ENCODE measurements at regions of chr1 and their contacts with region 1.

Region 1: GRCh38 chr1:1273512-1274298 is at the start of gene UBE2J2:
- DNase-seq: peak; percentile 86 to 96
- ATAC-seq: peak; percentile 96 to 99 (median 98)
- H3K4me3 ChIP-seq: peak within 1 kb of the TSS; percentile 74
- H3K4me3 Mint-ChIP-seq: peak within 1 kb of the TSS; percentile 84
- H3K27ac ChIP-seq: peak within 1 kb of the TSS; percentile 36
- H3K27ac Mint-ChIP-seq: peak within 1 kb of the TSS; percentile 51 to 58
- H3K4me1 ChIP-seq: peaks cover 40% of the 10 kb centered on the region
- H3K4me1 Mint-ChIP-seq: peaks cover 28 to 37% of the 10 kb centered on the region in 2 donors
- H3K27me3 ChIP-seq: no peaks in the 10 kb centered on the region
- H3K27me3 Mint-ChIP-seq: no peaks in the 10 kb centered on the region
- CTCF ChIP-seq: no peak
- total RNA-seq, gene UBE2J2: 66.0 to 84.2 (median 78.1) TPM

Region 2: DNA sequence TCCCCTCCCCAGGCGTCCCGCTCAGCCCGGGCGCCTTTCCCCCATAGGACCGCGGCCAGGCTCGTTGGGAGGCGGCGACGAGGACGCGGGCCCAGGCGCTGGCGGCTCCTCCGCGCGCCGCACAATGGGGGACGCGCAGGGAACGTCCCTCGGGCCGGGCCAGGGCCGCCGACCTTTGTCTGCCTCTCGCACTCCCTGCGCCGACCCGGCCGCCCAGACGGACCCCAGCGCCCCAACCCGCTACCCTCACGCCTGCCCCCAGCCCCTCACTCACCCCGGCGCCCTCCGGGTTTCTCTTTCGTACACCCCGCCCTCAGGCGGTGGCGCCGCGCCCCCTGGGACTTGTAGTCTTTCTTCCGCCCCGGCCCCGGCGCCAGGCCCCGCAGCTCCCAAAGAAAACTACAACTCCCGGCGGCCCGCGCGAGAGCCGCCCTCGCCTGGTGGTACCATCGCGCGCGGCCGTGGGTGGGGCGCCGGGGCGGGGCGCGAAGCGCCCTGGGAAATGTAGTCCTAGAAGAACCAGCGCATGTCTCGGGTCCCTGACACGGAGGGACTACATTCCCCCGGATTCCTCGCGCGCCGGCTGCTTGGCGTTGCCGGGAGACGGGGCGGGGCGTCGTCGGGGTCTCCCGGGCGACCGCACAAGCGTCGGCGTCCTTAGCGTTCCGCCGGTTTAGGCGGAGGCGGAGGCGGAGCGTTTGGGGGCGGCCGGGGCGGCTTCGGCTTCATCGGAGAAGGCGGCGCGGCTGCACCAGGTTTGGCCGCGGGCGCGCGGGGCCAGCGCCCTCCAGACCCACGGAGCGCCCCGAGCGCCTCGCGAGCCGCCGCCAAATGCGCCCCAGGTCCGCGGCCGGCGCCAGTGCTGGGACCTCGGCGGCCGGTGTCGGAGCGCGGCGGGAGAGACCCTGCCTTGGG is 157.7 kb before region 1 on chr1 and contains the start of gene C1orf159:
- intact Hi-C with region 1: loop called (anchors 5 kb)
- DNase-seq: peak; percentile 97
- ATAC-seq: peak; percentile 93 to 98 (median 96)
- H3K4me3 ChIP-seq: peak within 1 kb of the TSS; percentile 46
- H3K4me3 Mint-ChIP-seq: peak within 1 kb of the TSS; percentile 90
- H3K27ac ChIP-seq: peak within 1 kb of the TSS; percentile 70
- H3K27ac Mint-ChIP-seq: peak within 1 kb of the TSS; percentile 73 to 95
- H3K4me1 ChIP-seq: peaks cover 16% of the 10 kb centered on the region
- H3K4me1 Mint-ChIP-seq: peaks cover 0 to 12% of the 10 kb centered on the region in 2 donors
- H3K27me3 ChIP-seq: peaks cover 2% of the 10 kb centered on the region
- H3K27me3 Mint-ChIP-seq: peaks cover 0 to 3% of the 10 kb centered on the region in 2 donors
- CTCF ChIP-seq: no peak
- total RNA-seq, gene C1orf159: 19.6 to 25.1 (median 21.5) TPM

Region 3: GRCh38 chr1:1217621-1218523 is 55.8 kb before region 1 on chr1:
- intact Hi-C with region 1: no loop called
- DNase-seq: peak in 1 of 2 donors; percentile 54
- ATAC-seq: no peak
- H3K4me3 ChIP-seq: no peak overlapping the region
- H3K4me3 Mint-ChIP-seq: peak overlapping the region; percentile 50
- H3K27ac ChIP-seq: peak overlapping the region; percentile 61
- H3K27ac Mint-ChIP-seq: peak overlapping the region; percentile 98 to 99
- H3K4me1 ChIP-seq: peaks cover 99% of the 10 kb centered on the region
- H3K4me1 Mint-ChIP-seq: peaks cover 21 to 69% of the 10 kb centered on the region in 2 donors
- H3K27me3 ChIP-seq: no peaks in the 10 kb centered on the region
- H3K27me3 Mint-ChIP-seq: no peaks in the 10 kb centered on the region
- CTCF ChIP-seq: no peak

Region 4: DNA sequence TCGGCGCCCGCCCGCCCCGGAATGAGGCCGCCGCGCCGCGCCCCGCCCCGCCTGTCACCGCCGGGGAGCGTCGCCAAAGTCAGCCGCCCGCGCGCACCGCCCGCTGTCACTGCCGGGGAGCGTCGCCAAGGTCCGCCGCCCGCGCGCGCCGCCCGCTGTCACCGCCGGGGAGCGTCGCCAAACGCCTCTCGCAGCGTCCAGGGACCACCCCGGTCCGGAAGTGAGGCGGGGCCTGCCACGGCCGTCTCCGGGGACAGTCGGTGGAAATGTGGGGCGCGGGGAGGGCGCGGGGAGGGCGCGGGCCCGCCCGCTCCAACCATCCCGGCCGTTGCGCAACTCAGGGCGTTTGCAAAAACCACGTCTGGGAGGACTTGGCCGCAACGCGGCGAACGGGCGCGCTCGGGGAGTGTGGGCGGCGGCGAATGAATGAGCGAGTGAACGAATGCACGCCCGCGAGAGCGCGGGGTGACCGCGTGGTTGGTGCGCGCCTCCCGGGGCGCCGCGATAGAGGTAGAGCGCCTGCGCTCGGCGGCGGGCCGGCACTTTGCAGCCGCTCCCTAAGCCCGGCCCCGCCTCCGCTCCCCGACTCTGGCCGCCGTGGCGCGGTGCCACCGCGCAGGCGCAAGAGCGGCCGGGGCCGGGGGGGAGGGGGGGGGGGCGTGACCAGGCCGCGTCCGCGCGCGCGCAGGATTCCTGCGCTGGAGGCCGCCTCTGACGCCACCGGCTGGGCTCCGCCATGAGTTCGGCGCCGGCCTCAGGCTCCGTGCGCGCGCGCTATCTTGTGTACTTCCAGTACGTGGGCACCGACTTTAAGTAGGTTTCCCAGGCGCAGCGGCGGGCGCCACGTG is 34.4 kb after region 1 on chr1 and contains the starts of genes ACAP3 and PUSL1:
- intact Hi-C with region 1: loop called (anchors 5 kb)
- DNase-seq: peak; percentile 89 to 96
- ATAC-seq: peak; percentile 78 to 91 (median 79)
- H3K4me3 ChIP-seq: peak within 1 kb of the TSS; percentile 64
- H3K4me3 Mint-ChIP-seq: peak within 1 kb of the TSS; percentile 86
- H3K27ac ChIP-seq: peak within 1 kb of the TSS; percentile 85
- H3K27ac Mint-ChIP-seq: peak within 1 kb of the TSS; percentile 79 to 82
- H3K4me1 ChIP-seq: peaks cover 47% of the 10 kb centered on the region
- H3K4me1 Mint-ChIP-seq: peaks cover 6 to 26% of the 10 kb centered on the region in 2 donors
- H3K27me3 ChIP-seq: no peaks in the 10 kb centered on the region
- H3K27me3 Mint-ChIP-seq: no peaks in the 10 kb centered on the region
- CTCF ChIP-seq: no peak
- total RNA-seq, gene ACAP3: 56.1 to 59.7 (median 59.0) TPM
- total RNA-seq, gene PUSL1: 11.1 to 13.0 (median 12.9) TPM

Measured in natural killer cell (primary cell).